ENCODE measurements at regions of chr6 and their contacts with region 1.

Region 1: DNA sequence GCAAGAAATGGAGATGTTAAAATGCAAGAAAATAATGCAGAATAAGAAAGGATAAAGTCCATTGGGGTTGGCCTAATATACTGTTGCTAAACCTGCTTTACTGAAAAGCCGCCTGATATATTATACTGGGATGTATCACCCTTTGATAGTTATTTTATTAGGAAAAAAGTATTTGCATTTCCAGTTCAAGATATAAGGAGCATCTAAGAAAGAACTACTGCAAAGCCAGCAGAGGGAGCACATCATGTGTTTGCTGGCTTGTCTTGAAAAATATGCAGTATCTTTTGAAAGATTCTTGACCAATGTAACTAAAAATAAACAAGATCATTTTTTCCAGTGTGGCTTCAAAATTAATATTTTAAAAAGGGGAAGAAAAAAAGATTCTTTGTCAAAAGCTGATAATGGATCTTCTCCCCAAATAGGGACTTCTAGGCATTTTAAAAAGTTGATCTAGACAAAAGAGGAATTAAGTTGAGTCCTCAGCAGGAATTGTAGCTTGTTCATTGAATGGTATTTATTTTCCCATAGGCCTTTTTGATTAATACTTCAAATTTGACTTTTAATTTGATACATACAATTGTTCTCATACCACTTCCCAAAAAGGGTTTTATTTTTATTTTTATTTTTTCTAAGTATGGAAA is 214.9 kb downstream of the ZFAND3 start:
- DNase-seq: no peak
- CTCF ChIP-seq: peak; percentile 57

Region 2: DNA sequence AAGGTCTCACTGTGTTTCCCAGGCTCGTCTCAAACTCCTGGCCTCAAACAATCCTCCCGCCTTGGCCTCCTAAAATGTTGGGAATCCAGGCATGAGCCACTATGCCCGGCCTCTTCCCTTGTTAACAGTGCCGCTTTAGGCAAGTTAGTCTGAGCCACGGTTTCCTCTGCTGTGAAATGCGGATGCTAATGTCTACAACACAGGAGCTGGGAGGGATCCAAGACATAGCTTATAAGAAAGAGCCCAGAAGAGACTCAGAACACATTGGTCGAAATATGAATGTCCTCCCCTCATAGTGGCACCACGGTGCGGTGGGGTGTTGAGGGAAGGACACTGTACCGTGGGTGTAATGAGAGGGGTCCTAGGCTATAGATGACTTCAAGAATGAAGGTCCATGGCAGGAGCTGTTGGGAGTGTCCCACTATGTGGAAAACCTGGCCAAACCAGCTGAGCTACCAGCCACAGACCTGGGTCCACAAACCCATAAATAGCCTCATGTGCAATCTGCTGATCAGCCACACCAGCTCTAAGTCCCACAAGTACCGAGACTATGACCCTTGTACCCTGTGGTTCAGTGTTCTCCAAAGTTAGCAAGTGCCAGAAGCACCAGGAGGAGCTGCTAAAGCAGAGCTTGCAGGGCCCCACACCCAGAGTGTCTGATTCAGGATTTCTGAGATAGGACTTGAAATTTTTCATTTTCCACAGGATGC is 272.7 kb before region 1 on chr6:
- in situ Hi-C with region 1: no loop called
- DNase-seq: no peak
- CTCF ChIP-seq: no peak

Region 3: DNA sequence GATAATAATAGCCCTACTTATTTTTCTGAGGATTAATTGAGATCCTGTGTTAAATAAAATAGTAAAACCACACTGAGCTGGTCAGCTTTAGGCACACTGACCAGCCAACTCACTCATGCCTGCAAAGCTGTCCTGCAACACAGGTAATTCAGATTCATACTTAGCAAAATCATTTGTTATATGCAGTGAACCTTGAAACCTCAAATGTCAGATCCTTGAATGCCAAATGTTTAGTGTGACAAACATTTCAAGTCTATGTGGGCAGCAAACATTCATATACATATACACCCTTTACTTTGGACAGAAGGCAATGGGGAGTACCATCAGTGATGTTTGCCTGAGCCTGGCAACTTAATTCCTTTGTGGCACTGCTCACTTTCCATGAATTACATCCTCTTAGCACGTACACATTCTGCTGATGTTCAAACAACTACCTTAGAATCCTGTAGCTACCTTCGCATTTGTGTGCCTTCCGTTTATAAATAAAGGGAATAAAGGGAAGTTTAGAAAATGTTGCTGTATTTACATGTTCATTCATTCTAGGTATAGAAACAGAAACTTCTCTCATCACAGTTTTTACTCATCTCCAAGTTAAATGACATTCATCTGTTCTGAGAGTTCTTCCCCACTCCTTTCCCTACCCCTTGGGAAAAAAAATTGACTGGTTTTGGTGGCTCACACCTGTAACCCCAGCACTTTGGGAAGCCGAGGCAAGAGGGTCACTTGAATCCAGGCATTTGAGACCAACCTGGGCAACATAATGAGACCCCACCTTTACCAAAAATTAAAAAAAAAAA is 74.1 kb before region 1 on chr6:
- in situ Hi-C with region 1: no loop called
- DNase-seq: no peak
- CTCF ChIP-seq: no peak

Region 4: GRCh38 chr6:38493931-38494547 is 459.6 kb after region 1 on chr6:
- in situ Hi-C with region 1: loop called (anchors 10 kb)
- DNase-seq: peak; percentile 19
- CTCF ChIP-seq: peak; percentile 74

Measured in GM13977 (cell line).